ENCODE measurements at regions of chr11 and their contacts with region 1.

Region 1: DNA sequence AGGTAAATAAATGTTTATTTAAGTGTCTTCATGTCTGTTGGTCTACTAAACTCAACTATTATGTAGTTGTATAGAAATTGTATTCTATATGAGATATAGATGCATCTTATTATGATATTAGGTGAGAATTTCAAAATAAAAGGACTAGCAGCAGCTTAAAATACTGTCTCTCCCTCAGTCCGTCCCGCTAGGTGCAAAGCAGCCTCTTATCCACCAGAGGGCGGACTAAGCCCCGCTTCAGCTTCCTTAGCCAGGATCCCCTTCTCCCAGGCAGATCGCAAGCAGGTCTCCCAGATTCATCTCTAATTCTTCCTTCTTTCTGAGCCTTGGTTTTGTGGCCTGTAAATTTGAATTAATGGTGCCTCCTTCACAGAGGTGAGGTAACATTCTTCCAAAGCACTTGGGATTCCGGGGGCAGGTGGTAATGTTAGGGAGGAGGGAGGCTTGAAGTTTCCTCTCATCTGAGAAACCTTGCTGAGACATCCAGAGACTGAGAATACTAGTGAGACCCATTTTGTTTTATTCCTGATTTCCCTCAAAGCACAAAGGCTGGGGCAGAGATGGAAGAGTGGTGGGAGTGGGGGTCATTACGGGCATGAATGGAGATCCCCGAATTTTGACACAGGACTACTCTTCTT is 13.5 kb upstream of the INSC start:
- DNase-seq: peak; percentile 70
- H3K4me3 Mint-ChIP-seq: no peak overlapping the region
- H3K27ac Mint-ChIP-seq: no peak overlapping the region
- H3K4me1 Mint-ChIP-seq: peaks cover 7% of the 10 kb centered on the region
- H3K27me3 Mint-ChIP-seq: peaks cover 45% of the 10 kb centered on the region
- CTCF ChIP-seq: peak; percentile 88

Region 2: DNA sequence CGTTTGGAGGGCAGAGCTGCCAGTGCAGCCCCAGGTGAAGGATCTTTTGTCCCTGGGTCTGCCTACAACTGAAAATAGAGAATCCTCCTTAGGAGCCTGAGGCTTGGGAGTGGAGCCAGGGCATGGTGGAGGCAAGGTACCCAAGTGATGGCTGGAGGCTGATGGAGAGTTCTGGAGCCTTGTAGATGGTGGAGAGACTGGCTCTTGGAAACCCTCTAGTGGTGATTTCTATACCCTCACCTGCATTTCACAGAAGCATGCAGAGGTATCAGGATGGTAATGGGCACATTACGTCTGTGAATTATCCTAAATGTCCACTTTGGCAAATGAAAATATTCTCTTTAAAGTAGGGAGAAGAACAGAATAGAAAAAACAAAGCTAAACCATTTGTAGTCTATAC is 57.9 kb after region 1 on chr11:
- CTCF ChIA-PET with region 1: interaction called, 10 read pairs
- intact Hi-C with region 1: loop called (anchors 1 kb)
- DNase-seq: peak; percentile 12
- H3K4me3 Mint-ChIP-seq: no peak overlapping the region
- H3K27ac Mint-ChIP-seq: no peak overlapping the region
- H3K4me1 Mint-ChIP-seq: peaks cover 6% of the 10 kb centered on the region
- H3K27me3 Mint-ChIP-seq: peaks cover 32% of the 10 kb centered on the region
- CTCF ChIP-seq: peak; percentile 46

Region 3: GRCh38 chr11:15208378-15209222 is 107.4 kb after region 1 on chr11:
- CTCF ChIA-PET with region 1: interaction called, 14 read pairs
- intact Hi-C with region 1: loop called (anchors 1 kb)
- DNase-seq: peak; percentile 86
- H3K4me3 Mint-ChIP-seq: no peak overlapping the region
- H3K27ac Mint-ChIP-seq: no peak overlapping the region
- H3K4me1 Mint-ChIP-seq: peaks cover under 1% of the 10 kb centered on the region
- H3K27me3 Mint-ChIP-seq: peaks cover 47% of the 10 kb centered on the region
- CTCF ChIP-seq: peak; percentile 92

Measured in Calu3 (cell line).